ENCODE measurements at regions of chr9 and their contacts with region 1.

Region 1: GRCh38 chr9:104991144-104991953 is 63.4 kb upstream of the ABCA1 start:
- DNase-seq: peak; percentile 99
- H3K4me3 ChIP-seq: peak overlapping the region; percentile 49 to 61 (median 57)
- H3K27ac ChIP-seq: peak overlapping the region; percentile 91 to 97 (median 96)
- H3K4me1 ChIP-seq: peaks cover 0 to 43% (median 40%) of the 10 kb centered on the region in 4 donors
- H3K27me3 ChIP-seq: no peaks in the 10 kb centered on the region
- CTCF ChIP-seq: no peak
- EP300 ChIP-seq: peak; percentile 67 to 90 (median 83)
- POLR2A ChIP-seq: peak in 1 of 2 donors; percentile 37

Region 2: DNA sequence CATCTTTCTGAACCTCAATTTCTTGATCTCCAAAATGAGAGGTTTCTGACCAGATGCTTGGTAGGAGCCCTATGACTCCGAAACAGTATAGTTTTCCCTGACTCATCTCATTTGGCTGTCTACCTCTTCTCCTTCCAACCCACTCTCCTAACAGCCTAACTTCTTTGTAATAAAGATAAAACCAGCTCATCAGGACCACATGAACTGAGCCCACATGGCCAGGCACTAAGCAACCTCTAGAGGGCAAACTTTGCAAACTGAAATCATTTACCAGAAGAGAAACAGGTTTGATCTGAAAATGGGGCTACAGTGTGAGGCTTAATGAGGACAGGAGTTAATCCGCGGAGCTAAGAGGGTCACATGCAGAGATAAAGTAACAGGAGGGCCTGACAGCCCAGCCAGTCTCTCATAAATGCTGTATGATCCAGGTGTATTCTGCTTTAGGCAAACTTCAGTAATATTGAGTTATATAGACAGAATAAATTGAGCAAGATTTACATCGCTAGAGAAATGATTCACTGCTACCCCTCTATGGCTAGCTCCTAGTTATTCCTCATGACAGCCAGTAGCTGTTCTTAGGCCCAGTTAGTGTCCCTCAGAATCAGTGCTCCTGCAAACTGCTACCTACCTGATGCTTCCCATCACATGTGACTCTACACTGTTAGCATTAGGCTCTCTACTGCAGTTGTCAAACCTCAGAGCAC is 128.0 kb before region 1 on chr9:
- intact Hi-C with region 1: loop called (anchors 10 kb)
- DNase-seq: no peak
- H3K4me3 ChIP-seq: no peak overlapping the region
- H3K27ac ChIP-seq: peak overlapping the region; percentile 8 to 79 (median 67)
- H3K4me1 ChIP-seq: peaks cover 0 to 79% (median 75%) of the 10 kb centered on the region in 4 donors
- H3K27me3 ChIP-seq: no peaks in the 10 kb centered on the region
- CTCF ChIP-seq: peak in 3 of 4 experiments; percentile 62 to 70 (median 67)
- EP300 ChIP-seq: no peak
- POLR2A ChIP-seq: no peak

Region 3: DNA sequence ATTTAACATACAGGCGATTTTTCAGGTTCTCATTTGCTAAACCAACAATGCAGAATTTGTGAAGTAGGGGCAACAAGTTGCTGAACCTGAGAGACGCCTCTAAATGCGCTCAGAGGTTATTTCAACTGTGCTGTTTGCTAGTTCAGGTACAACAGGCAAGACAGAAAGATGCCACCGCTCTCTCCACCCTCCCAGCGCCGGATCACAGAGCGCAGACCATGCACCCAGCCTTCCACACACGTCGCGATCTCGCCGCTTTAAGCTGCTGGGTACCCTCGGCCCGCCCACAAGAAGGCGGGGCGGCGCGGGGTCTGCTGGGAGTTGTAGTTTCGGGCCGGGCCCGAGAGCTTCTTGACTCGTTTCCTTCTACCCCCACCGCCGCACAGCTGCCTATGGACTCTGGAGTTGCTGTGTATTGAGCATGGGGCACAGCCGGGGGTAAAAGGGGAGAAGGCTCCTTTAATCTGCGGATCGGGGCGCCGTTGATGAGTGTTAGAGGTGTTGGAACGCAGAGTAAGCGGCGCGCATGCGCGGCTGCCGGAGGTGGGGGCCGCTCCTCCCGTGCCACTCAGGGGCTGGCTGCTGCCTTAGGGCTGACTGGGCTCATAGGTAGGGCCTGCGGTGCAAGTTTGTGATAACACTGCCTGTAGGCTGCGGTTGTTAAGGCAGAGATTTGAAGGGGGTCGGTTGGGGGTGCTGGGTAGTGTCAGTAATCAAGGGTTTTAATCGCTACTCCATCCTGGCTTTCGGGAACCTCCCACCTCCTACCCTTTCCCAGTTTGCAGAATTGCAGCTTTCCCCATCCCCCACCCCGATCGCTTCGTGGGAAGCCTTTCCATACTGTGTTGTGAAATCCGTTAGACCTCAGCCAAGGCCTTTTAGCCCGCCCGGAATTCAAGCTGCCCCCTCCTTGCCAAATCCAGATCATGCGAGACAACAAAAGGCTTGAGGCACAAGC is 23.0 kb before region 1 on chr9:
- intact Hi-C with region 1: loop called (anchors 1 kb)
- DNase-seq: peak; percentile 97
- H3K4me3 ChIP-seq: peak overlapping the region; percentile 46 to 74 (median 64)
- H3K27ac ChIP-seq: peak overlapping the region; percentile 85 to 98 (median 94)
- H3K4me1 ChIP-seq: peaks cover 0 to 40% (median 30%) of the 10 kb centered on the region in 4 donors
- H3K27me3 ChIP-seq: no peaks in the 10 kb centered on the region
- CTCF ChIP-seq: no peak
- EP300 ChIP-seq: peak in 3 of 4 donors; percentile 39 to 82 (median 43)
- POLR2A ChIP-seq: peak; percentile 50 to 54

Region 4: GRCh38 chr9:105064315-105065097 is 73.2 kb after region 1 on chr9:
- intact Hi-C with region 1: loop called (anchors 1 kb)
- DNase-seq: peak; percentile 99
- H3K4me3 ChIP-seq: no peak overlapping the region
- H3K27ac ChIP-seq: peak overlapping the region; percentile 83 to 87 (median 87)
- H3K4me1 ChIP-seq: peaks cover 0 to 38% (median 26%) of the 10 kb centered on the region in 4 donors
- H3K27me3 ChIP-seq: no peaks in the 10 kb centered on the region
- CTCF ChIP-seq: no peak
- EP300 ChIP-seq: peak; percentile 68 to 89 (median 86)
- POLR2A ChIP-seq: peak; percentile 24 to 47

Region 5: DNA sequence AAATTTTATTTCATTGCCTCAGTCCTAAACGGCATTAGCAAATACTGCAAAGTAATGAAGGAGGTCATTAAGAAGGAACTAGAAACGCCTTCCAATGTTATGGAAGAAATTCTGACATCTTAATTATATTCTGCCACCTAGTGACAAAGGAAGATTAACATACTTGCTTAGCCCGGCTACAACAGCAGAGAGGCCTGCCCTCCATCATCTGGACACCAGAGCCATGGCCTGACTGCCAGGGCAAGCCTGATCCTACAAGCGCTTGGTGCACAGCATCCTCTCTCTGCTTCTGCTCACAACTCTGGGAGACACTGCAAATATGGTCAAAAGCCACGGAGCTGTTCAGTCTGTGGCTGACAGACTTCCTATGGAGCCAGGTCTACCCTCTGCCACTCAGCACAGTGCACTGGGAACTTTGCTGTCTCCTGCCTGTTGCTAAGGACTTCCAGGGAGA is 165.8 kb after region 1 on chr9:
- intact Hi-C with region 1: loop called (anchors 2 kb)
- DNase-seq: peak; percentile 95
- H3K4me3 ChIP-seq: no peak overlapping the region
- H3K27ac ChIP-seq: peak overlapping the region; percentile 56 to 79 (median 70)
- H3K4me1 ChIP-seq: peaks cover 0 to 18% (median 16%) of the 10 kb centered on the region in 4 donors
- H3K27me3 ChIP-seq: no peaks in the 10 kb centered on the region
- CTCF ChIP-seq: peak in 3 of 4 experiments; percentile 36 to 58 (median 36)
- EP300 ChIP-seq: peak; percentile 27 to 93 (median 83)
- POLR2A ChIP-seq: no peak

Region 6: GRCh38 chr9:105244003-105244733 is 252.8 kb after region 1 on chr9 and contains the start of gene SLC44A1:
- intact Hi-C with region 1: loop called (anchors 10 kb)
- DNase-seq: peak; percentile 98
- H3K4me3 ChIP-seq: peak within 1 kb of the TSS; percentile 72 to 92 (median 84)
- H3K27ac ChIP-seq: peak within 1 kb of the TSS; percentile 78 to 84 (median 82)
- H3K4me1 ChIP-seq: peaks cover 0 to 31% (median 18%) of the 10 kb centered on the region in 4 donors
- H3K27me3 ChIP-seq: no peaks in the 10 kb centered on the region
- CTCF ChIP-seq: no peak
- EP300 ChIP-seq: no peak
- POLR2A ChIP-seq: no peak
- total RNA-seq, gene SLC44A1: 19.7 to 35.4 (median 26.0) TPM

Region 7: GRCh38 chr9:105401651-105402050 is 410.3 kb after region 1 on chr9:
- intact Hi-C with region 1: no loop called
- DNase-seq: no peak
- H3K4me3 ChIP-seq: no peak overlapping the region
- H3K27ac ChIP-seq: no peak overlapping the region
- H3K4me1 ChIP-seq: no peaks in the 10 kb centered on the region
- H3K27me3 ChIP-seq: no peaks in the 10 kb centered on the region
- CTCF ChIP-seq: no peak
- EP300 ChIP-seq: no peak
- POLR2A ChIP-seq: no peak

Region 8: GRCh38 chr9:105414947-105415661 is 423.8 kb after region 1 on chr9:
- intact Hi-C with region 1: loop called (anchors 10 kb)
- DNase-seq: peak; percentile 75
- H3K4me3 ChIP-seq: no peak overlapping the region
- H3K27ac ChIP-seq: no peak overlapping the region
- H3K4me1 ChIP-seq: peaks cover 0 to 7% (median 4%) of the 10 kb centered on the region in 4 donors
- H3K27me3 ChIP-seq: no peaks in the 10 kb centered on the region
- CTCF ChIP-seq: peak; percentile 70 to 90 (median 87)
- EP300 ChIP-seq: no peak
- POLR2A ChIP-seq: no peak